ENCODE measurements at regions of chr9 and their contacts with region 1.

Region 1: GRCh38 chr9:68584189-68585033 is 43.7 kb upstream of the TMEM252 start:
- H3K4me3 ChIP-seq: no peak overlapping the region
- H3K27ac ChIP-seq: no peak overlapping the region
- H3K4me1 ChIP-seq: no peaks in the 10 kb centered on the region
- CTCF ChIP-seq: peak; percentile 74

Region 2: GRCh38 chr9:68567565-68567964 is 16.8 kb before region 1 on chr9:
- CTCF ChIA-PET with region 1: interaction called, 45 read pairs
- POLR2A ChIA-PET with region 1: no interaction called
- H3K4me3 ChIP-seq: no peak overlapping the region
- H3K27ac ChIP-seq: no peak overlapping the region
- H3K4me1 ChIP-seq: no peaks in the 10 kb centered on the region
- CTCF ChIP-seq: no peak

Region 3: DNA sequence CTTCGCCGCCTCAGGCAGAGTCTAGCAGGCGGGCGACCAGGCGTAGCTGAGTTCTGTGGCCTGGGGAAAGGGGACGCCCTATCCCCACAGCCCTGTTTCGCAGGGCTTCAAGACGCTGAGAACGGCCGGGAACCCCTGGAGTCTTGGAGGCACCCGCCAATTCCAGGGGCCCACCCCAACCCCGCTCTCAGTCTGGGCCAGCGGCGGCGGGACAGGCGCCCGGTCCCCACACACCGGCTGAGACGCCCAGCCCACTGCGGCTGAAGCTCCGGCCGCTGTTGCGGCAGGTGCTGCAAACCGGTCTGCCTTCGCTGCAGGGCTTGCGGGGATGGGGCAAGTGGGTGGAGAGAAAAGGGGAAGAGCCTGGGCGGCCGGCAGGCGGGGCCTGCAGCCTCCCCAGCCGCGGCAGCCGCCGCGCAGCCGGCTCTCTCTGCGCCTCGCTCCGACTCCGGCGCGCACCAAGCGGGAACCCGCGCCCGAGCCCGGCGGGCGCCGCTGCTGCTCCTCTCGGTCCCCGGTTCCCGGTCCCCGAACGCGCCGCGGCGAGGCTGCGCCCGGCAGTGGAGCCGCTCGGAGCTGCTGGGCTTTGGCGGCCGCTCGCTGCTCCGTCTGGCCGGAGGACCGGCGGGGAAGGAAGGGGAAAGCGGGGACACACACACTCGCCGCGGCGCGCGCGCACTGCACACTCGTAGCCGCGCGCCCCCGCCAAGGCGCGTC is 120.6 kb after region 1 on chr9 and contains the start of gene PIP5K1B:
- CTCF ChIA-PET with region 1: interaction called, 10 read pairs
- POLR2A ChIA-PET with region 1: no interaction called
- H3K4me3 ChIP-seq: peak within 1 kb of the TSS; percentile 67
- H3K27ac ChIP-seq: peak within 1 kb of the TSS; percentile 50; the same call in 1 of the 2 replicates
- H3K4me1 ChIP-seq: no peaks in the 10 kb centered on the region
- CTCF ChIP-seq: no peak

Region 4: DNA sequence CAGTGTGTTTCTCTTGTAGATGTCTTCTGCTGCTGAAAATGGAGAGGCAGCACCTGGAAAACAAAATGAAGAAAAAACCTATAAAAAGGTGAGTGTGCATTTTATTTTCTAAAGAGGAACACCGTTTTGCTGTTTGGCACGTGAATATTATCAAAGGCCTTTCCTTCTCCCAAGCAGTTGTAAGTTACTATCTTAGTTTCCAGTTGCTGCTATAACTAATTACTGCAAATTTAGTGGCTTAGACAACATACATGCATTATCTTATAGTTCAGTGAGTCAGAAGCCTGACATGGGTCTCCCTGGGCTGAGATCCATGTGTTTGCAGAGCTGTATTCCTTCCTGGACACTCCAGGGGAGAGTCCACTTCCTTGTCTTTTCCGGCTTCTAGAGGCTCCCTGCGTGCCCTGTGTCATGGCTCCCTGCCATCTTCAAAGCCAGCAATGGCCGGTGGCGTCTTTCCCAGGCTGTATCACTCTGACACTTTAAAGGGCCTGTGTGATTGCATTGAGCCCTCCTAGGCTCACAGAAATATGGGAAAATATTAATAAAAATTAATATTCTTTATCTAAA is 238.3 kb after region 1 on chr9:
- CTCF ChIA-PET with region 1: no interaction called
- POLR2A ChIA-PET with region 1: no interaction called
- H3K4me3 ChIP-seq: no peak overlapping the region
- H3K27ac ChIP-seq: no peak overlapping the region
- H3K4me1 ChIP-seq: no peaks in the 10 kb centered on the region
- CTCF ChIP-seq: no peak

Region 5: DNA sequence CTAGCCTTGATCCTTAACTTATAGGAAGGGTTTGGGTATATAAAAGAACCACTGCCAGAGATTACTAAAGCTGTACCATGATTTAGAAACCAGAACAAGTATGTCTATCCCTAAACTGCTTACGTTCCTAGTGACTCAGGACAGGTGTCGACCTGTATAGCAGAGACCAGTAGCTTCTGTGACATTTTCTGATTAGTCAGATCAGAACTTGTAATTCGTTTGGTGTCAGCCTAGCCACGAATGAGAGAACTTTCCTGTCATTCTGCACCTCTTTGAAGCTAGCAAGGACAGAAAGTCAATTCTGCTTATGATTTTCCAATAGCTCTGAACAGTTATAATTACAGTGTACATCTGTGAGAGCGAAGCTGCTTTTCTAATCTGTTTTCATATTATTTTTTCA is 390.0 kb after region 1 on chr9:
- CTCF ChIA-PET with region 1: interaction called, 10 read pairs
- POLR2A ChIA-PET with region 1: no interaction called
- H3K4me3 ChIP-seq: no peak overlapping the region
- H3K27ac ChIP-seq: no peak overlapping the region
- H3K4me1 ChIP-seq: peaks cover 4% of the 10 kb centered on the region; the same call in 1 of the 2 replicates
- CTCF ChIP-seq: no peak

Region 6: DNA sequence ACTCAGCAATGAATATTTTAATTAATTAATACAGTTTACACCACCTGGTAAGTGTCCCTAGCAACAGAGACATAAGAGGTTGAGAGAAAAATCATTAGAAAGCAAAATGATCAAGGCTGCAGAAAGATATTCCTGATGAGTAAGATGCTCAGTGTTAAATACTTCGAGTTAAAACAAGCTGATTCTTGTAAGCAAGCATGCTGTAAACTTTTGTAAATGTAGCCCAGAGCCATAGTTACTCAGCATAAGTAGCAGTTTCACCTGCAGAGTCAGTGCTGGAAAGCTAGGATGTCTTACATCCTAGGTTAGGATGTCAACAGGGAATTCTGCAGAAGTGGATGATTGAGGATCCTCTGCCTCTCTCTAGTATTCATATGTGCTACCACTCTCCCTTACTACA is 425.3 kb after region 1 on chr9:
- CTCF ChIA-PET with region 1: interaction called, 13 read pairs
- POLR2A ChIA-PET with region 1: no interaction called
- H3K4me3 ChIP-seq: no peak overlapping the region
- H3K27ac ChIP-seq: no peak overlapping the region
- H3K4me1 ChIP-seq: no peaks in the 10 kb centered on the region
- CTCF ChIP-seq: no peak

Measured in HEK293 (cell line).